ENCODE measurements at regions of chr18 and their contacts with region 1.

Region 1: DNA sequence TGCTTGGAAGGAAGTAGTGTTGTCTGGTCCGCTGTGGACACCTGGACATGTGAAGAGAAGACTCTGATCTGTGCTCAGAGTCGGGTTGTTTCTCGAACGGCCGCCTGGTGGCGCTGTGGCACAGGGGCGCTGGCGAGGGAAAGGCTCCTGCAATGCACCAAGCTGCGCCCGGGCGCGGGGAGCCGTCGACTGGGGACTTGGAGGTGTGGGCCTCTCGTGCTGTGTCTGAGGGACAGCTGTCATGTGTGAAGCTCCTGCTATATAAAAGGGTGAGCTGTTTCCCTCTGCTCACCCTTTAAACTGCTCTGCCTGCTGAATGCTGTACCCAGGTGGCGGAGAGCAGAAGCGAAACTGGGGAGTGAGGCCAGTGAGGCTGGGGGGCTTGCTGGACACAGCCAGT is 44.0 kb downstream of the GNAL start:
- DNase-seq: peak; percentile 63
- H3K4me3 ChIP-seq: peak overlapping the region in 1 of 3 experiments; percentile 16
- H3K27ac ChIP-seq: no peak overlapping the region
- H3K4me1 ChIP-seq: peaks cover 12% of the 10 kb centered on the region
- H3K27me3 ChIP-seq: no peaks in the 10 kb centered on the region
- CTCF ChIP-seq: peak; percentile 87 to 96

Region 2: DNA sequence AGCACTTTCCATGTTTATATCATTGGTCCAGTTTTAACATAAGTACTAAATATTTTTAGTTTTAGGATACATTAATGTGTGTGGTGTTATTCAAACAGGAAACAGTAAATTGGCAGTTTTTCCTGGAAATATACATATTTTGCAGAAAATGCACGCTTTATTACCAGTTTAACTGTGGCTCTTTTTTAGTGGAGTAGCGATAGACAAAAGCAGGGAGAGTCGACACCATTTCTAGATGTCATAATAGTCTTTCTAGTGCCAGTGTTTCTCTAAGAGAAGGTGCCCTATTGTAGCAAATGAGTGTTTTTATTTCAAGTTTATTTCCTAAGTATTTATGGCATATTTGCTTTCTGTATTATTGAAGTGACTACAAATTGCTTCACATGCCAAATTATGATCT is 132.7 kb before region 1 on chr18:
- CTCF ChIA-PET with region 1: no interaction called
- dilution Hi-C with region 1: no loop called
- in situ Hi-C with region 1: no loop called
- intact Hi-C with region 1: no loop called
- DNase-seq: no peak
- H3K4me3 ChIP-seq: no peak overlapping the region
- H3K27ac ChIP-seq: no peak overlapping the region
- H3K4me1 ChIP-seq: no peaks in the 10 kb centered on the region
- H3K27me3 ChIP-seq: no peaks in the 10 kb centered on the region
- CTCF ChIP-seq: no peak

Region 3: DNA sequence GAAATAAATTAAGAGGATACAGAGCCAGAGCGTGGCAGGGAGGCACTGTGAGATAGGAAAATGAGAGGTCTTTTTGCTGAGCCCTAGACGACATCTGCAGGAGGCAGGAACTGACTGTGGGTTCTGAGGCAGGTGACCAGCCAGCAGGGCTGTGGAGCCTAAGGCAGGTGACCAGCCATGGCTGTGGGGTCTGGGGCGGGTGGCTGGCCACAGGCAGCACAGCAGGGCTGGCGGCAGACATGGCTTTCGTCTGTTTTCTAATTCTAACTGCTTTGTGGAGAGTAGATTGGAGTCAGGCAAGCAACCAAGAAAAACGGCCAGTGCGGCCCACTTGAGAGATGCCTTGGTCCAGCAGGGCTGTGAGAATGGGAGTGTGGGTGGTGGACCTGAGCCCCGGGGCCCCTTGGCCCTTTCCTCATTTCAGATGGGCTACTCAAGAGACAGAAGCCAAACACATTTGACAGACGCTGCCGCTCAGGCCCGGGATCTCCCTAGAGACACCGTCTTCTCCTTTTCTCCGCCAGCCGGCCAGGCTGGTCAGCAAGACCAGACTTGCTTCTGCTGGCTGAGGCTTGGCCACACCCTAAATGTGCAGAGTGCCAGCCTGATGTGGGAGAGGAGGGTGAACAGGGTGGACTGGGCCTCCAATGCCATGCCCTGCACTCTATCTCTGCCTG is 63.6 kb before region 1 on chr18:
- CTCF ChIA-PET with region 1: no interaction called
- dilution Hi-C with region 1: loop called (anchors 5 kb)
- in situ Hi-C with region 1: no loop called
- intact Hi-C with region 1: no loop called
- DNase-seq: peak; percentile 82
- H3K4me3 ChIP-seq: no peak overlapping the region
- H3K27ac ChIP-seq: peak overlapping the region; percentile 39
- H3K4me1 ChIP-seq: peaks cover 16% of the 10 kb centered on the region
- H3K27me3 ChIP-seq: no peaks in the 10 kb centered on the region
- CTCF ChIP-seq: no peak

Region 4: DNA sequence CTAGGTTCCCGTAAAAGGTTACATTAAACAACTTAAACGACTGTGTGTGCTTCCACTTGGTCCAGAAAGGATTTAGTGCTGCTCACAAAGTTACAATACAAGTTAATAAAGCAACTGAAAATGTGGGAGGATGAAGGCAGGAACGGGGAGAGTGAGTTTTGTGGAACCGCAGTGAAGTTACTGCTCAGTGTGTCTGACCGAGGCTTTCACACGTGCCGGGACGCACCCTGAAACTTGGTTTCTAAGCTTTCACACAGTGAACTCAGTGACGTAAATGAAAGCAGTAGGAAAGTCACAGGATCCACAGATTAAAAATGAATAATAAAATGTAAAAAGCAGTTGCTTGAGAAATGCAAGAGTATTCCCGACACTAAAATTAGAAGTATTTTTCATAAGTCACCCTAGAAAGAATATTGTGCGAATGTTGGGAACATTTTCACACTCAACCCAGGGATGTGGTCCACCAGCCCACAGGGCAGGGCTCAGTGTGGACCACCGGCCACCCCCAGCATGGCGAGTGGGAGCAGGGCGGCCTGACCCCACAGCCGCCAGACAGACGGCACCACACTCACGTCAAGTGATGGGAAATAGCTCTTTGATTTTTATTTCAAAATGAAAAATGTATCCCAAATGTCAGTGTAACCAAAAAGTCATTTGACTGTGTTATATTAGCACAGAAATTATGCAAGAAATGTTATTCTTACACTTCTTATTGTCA is 85.6 kb after region 1 on chr18:
- CTCF ChIA-PET with region 1: no interaction called
- dilution Hi-C with region 1: no loop called
- in situ Hi-C with region 1: no loop called
- intact Hi-C with region 1: no loop called
- DNase-seq: no peak
- H3K4me3 ChIP-seq: no peak overlapping the region
- H3K27ac ChIP-seq: no peak overlapping the region
- H3K4me1 ChIP-seq: no peaks in the 10 kb centered on the region
- H3K27me3 ChIP-seq: no peaks in the 10 kb centered on the region
- CTCF ChIP-seq: no peak

Region 5: GRCh38 chr18:11851146-11851805 is 118.2 kb after region 1 on chr18 and contains the start of gene CHMP1B:
- CTCF ChIA-PET with region 1: no interaction called
- dilution Hi-C with region 1: no loop called
- in situ Hi-C with region 1: no loop called
- intact Hi-C with region 1: loop called (anchors 1 kb)
- DNase-seq: peak; percentile 95
- H3K4me3 ChIP-seq: peak within 1 kb of the TSS; percentile 55 to 85 (median 77)
- H3K27ac ChIP-seq: peak within 1 kb of the TSS; percentile 96
- H3K4me1 ChIP-seq: peaks cover 19% of the 10 kb centered on the region
- H3K27me3 ChIP-seq: no peaks in the 10 kb centered on the region
- CTCF ChIP-seq: no peak
- total RNA-seq, gene CHMP1B: 46.7 to 76.5 TPM

Region 6: DNA sequence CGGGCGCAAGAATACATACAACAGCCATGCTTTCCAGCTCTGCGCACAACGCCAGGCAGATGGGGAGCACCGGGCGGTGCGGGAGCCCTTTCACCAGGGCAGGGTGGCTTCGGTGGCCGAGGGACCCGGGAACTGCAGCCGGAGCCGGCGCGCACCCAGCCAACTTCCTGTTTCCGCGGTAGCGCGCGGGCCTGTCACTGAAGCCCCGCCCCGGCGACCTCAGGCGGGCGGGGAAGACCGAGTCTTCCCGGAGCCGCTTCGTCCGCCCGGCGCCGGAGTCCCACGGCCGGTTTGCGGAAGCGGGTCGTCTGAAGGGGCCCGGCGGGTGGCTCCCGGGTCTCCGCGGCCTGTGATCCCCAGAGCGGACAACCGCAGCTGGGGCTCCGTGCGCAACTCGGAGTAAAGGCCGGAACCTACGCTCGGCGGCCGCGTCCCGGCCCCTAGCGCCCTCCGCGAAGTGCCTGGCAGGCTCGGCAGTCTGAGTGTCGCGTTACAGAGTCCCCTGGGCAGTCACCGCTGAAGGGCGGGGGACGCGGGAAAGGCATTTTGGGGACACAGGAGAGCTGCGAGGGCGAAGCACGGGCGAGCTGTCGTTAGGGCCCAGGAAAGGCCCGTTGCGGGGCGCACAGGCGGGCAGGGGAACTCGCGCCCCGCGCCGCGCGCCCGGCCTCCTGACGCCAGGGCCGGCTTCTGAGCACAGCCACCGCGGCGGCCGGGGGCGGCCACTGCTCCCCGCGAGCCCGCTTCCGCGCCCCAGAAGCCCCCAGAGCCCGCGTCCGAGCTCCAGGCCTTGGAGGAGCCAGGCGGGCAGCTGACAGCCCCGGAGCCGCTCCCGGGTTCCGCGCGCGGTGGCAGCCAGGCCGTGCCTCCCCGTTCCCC is 175.4 kb after region 1 on chr18 and contains the start of gene MPPE1:
- CTCF ChIA-PET with region 1: interaction called, 19 read pairs
- dilution Hi-C with region 1: no loop called
- in situ Hi-C with region 1: no loop called
- intact Hi-C with region 1: no loop called
- DNase-seq: peak; percentile 82
- H3K4me3 ChIP-seq: peak within 1 kb of the TSS; percentile 71 to 92 (median 85)
- H3K27ac ChIP-seq: peak within 1 kb of the TSS; percentile 90
- H3K4me1 ChIP-seq: peaks cover 6% of the 10 kb centered on the region
- H3K27me3 ChIP-seq: no peaks in the 10 kb centered on the region
- CTCF ChIP-seq: no peak
- total RNA-seq, gene MPPE1: 27.2 to 33.6 TPM

Region 7: DNA sequence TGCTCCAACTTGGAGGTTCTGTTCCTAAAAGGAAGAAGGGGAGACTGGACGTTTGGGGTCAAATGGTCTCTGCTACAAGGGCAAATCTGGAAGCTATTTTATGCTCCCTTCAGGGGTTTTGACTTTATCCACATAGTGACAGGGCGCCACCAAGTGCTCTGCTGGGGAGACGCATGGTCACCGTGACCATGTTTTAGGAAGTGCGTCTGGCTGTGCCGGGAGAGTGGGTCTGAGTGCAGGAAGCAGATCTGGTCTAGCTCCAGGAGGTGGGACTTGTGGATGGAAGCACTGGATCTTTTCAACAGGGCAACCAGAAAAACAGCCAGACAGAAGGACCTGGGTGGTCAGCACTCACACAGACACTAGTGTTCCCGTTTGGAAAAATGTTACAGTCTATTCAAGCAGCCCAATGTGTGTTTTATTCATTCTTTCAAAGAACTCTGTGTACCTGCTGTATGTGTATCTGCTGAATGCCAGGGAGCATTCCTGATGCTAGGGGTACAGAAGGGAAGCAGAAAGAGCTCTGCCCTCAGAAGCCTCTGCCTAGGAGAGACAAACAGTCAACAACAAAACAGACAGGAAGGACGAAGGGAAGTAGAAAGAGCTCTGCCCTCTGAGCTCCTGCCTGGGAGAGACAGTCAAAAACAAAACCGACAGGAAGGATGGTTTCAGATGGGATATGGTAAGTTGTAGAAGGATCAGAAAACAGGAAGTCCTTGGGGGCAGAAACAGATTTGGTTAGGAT is 262.6 kb after region 1 on chr18:
- CTCF ChIA-PET with region 1: interaction called, 6 read pairs
- dilution Hi-C with region 1: no loop called
- in situ Hi-C with region 1: no loop called
- intact Hi-C with region 1: loop called (anchors 1 kb)
- DNase-seq: peak; percentile 54
- H3K4me3 ChIP-seq: no peak overlapping the region
- H3K27ac ChIP-seq: no peak overlapping the region
- H3K4me1 ChIP-seq: peaks cover 14% of the 10 kb centered on the region
- H3K27me3 ChIP-seq: no peaks in the 10 kb centered on the region
- CTCF ChIP-seq: peak; percentile 66 to 79

Region 8: DNA sequence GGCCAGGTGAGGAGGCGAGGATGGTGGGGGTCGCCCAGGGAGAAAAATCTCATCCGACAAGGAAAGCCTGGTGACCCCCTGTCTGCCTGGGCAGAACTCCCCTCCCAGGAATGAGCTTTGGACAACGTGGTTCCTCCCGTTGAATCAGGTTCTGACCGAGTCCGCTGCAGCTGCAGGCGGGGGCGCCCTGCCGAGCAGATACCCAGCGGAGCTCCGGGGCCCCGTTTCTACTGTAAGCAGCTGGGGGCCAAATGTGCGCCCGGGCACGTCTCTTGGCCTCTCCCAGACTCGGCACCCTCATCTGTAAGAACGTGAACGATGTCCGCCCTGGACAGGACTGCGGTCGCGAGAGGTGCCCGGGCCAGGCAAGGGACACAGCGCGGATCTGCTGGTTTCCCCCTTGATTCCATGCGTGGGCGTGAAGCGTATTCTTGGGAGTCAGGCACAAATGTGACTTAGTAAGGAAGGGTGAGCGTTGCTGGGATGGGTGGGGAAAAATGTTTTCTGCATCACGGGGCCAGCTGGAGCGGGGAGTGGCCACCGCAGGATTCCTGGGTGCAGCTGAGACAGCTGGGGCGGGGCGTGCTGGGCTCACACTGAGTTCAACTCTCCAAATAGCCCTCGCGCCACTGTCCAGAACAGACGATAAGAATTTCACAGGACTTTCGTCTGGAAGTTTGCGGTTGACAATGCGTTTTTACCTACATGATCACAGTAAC is 554.8 kb after region 1 on chr18:
- CTCF ChIA-PET with region 1: no interaction called
- dilution Hi-C with region 1: no loop called
- in situ Hi-C with region 1: no loop called
- intact Hi-C with region 1: no loop called
- DNase-seq: peak; percentile 98
- H3K4me3 ChIP-seq: peak overlapping the region; percentile 46 to 67 (median 58)
- H3K27ac ChIP-seq: peak overlapping the region; percentile 97
- H3K4me1 ChIP-seq: peaks cover 30% of the 10 kb centered on the region
- H3K27me3 ChIP-seq: no peaks in the 10 kb centered on the region
- CTCF ChIP-seq: peak in 1 of 2 donors; percentile 13

Measured in mammary epithelial cell (primary cell).